Astrocyte of the cerebellum (primary cell): ENCODE measurements at regions of chr1 and their contacts with region 1.

Region 1: DNA sequence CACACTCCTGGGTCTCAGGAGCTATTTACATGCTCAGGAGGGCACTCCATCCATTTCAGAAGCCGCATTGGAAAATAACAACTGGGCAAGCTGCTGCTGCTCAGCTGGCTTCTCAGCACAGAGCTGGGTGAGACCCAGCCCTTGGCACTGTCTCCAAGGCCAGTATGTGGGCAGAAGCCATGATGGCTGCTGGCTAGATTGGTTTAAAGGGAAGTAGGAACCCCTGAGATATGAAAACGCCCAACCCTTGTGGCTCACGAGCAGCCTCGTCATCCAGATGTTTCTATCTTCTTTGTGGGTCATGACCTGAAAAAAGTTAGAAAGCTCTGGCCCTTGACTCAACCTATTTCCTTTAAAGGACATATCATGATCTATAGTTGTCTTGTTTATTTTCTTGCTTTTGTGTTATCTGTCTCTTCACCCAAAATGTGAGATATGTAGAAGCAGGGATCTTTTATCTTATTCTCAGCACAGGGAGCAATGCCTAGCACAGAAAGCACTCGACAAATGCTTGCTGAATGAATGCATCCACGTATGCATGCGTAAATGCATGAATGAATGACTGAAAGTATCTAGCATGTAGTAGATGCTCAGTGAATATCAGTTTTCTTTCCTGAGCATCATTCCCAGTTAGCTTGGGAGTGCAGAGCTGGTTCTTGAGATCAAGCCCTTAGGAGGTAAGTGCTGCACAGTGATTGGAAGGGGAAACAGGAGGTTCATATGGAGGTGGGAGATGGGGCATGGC is 11.6 kb downstream of the MYBPH start:
- DNase-seq: no peak
- H3K4me3 ChIP-seq: no peak overlapping the region
- CTCF ChIP-seq: no peak

Region 2: GRCh38 chr1:203090421-203091387 is 73.4 kb before region 1 on chr1:
- in situ Hi-C with region 1: no loop called
- DNase-seq: no peak
- H3K4me3 ChIP-seq: no peak overlapping the region
- CTCF ChIP-seq: no peak

Region 3: DNA sequence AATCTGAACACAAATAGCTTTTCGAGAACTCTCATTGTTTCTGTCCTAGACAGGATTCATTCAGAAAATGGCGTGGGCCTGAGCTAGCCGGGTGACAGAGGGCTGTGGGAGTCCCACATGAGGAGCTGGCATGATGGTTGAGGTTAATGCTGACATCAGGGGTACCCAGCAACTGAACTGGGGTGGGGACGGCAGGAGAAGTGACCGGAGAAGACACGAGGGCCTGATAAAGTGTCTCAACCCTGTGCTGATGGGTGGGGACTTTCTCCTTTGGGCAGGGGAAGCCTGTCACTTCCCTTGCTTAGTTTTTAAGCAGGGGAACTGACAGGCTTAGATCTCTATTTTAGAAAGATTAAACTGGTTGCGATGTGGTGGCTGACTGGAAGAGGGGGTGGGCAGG is 50.8 kb after region 1 on chr1:
- in situ Hi-C with region 1: loop called (anchors 5 kb)
- DNase-seq: no peak
- H3K4me3 ChIP-seq: no peak overlapping the region
- CTCF ChIP-seq: no peak